ENCODE measurements at regions of chr6 and their contacts with region 1.

Region 1: GRCh38 chr6:107641500-107641941 is 151.6 kb downstream of the SOBP start:
- DNase-seq: peak; percentile 69 to 74
- ATAC-seq: peak; percentile 49 to 96 (median 88)
- H3K4me3 ChIP-seq: peak overlapping the region in 3 of 10 donors; percentile 1 to 11 (median 4)
- H3K27ac ChIP-seq: peak overlapping the region in 7 of 10 donors; percentile 13 to 66 (median 20)
- H3K4me1 ChIP-seq: peaks cover 0 to 45% (median 35%) of the 10 kb centered on the region in 9 donors
- H3K27me3 ChIP-seq: peaks cover 0 to 4% (median 0%) of the 10 kb centered on the region in 7 donors
- CTCF ChIP-seq: no peak

Region 2: GRCh38 chr6:107607116-107607515 is 34.4 kb before region 1 on chr6:
- intact Hi-C with region 1: loop called in 1 of 10 experiments (anchors 5 kb)
- DNase-seq: peak; percentile 38 to 65
- ATAC-seq: peak in 7 of 8 donors; percentile 46 to 80 (median 65)
- H3K4me3 ChIP-seq: no peak overlapping the region
- H3K27ac ChIP-seq: peak overlapping the region in 6 of 10 donors; percentile 18 to 45 (median 34)
- H3K4me1 ChIP-seq: peaks cover 10 to 79% (median 51%) of the 10 kb centered on the region in 9 donors
- H3K27me3 ChIP-seq: no peaks in the 10 kb centered on the region
- CTCF ChIP-seq: peak in 4 of 9 donors; percentile 17 to 42 (median 34)

Region 3: DNA sequence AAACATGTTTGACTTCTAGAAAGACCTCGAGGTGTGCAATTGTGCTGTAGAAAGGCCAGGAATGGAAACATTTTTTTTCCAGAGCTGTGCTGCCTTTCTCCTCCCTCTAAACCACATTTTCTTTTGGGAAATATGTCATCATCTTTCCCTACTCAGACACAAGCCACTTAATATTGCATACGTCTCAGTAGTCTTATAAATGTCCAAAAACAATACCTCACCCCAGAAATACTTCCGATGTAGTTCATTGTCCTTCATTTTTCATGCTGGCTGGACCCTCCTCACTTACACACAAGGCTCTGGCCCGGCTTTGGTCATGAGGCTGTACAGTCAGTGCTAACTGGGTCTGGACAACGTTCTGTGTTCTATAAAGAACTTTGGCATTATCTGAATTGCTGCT is 56.2 kb after region 1 on chr6:
- intact Hi-C with region 1: loop called in 1 of 10 experiments (anchors 2 kb)
- DNase-seq: no peak
- ATAC-seq: peak in 3 of 8 donors; percentile 47 to 58 (median 53)
- H3K4me3 ChIP-seq: no peak overlapping the region
- H3K27ac ChIP-seq: peak overlapping the region in 4 of 10 donors; percentile 39 to 73 (median 58)
- H3K4me1 ChIP-seq: peaks cover 0 to 14% (median 3%) of the 10 kb centered on the region in 9 donors
- H3K27me3 ChIP-seq: no peaks in the 10 kb centered on the region
- CTCF ChIP-seq: no peak

Measured in heart right ventricle (tissue), 16 donors.